Activated CD4-positive, alpha-beta memory T cell treated with anti-CD3 and anti-CD28 coated beads, Interleukin-2, amount 10 ng/mL, durations not matched to agents 7 days and 5 days (primary cell): ENCODE measurements at regions of chr7 and their contacts with region 1.

Region 1: DNA sequence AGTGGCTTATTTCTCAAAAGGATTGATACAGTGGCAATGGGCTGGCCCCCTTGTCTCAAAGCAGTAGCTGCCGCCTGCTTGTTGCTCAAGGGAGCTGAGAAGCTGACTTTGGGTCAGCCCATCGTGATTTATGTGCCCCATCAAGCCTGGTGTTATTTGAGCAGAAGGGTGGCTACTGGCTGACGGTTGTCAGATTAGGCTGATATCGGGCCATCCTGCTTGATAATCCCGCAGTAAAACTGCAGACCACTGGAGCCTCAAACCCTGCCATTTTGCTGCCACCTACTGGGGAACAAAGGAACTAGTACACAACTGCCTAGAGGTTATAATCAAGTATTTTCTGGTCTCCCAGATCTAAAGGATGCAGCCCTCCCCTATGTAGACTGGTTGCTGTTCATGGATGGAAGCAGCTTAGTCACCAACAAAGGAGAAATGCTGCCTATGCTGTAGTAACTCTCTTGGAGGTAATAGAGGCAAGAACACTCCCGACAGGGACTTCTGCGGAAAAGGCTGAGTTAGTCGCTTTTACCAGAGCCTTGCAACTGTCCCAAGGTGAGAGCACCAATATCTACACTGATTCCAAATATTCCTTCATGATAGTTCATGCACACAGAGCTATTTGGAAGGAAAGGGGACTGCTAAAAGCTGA is 65.9 kb upstream of the ZNF92 start:
- DNase-seq: peak; percentile 49
- H3K4me3 Mint-ChIP-seq: no peak overlapping the region
- H3K27ac Mint-ChIP-seq: no peak overlapping the region
- H3K4me1 Mint-ChIP-seq: no peaks in the 10 kb centered on the region
- H3K27me3 Mint-ChIP-seq: no peaks in the 10 kb centered on the region

Region 2: GRCh38 chr7:64914557-64914956 is 393.2 kb before region 1 on chr7:
- CTCF ChIA-PET with region 1: no interaction called
- POLR2A ChIA-PET with region 1: no interaction called
- DNase-seq: no peak
- H3K4me3 Mint-ChIP-seq: no peak overlapping the region
- H3K27ac Mint-ChIP-seq: no peak overlapping the region
- H3K4me1 Mint-ChIP-seq: no peaks in the 10 kb centered on the region
- H3K27me3 Mint-ChIP-seq: no peaks in the 10 kb centered on the region

Region 3: DNA sequence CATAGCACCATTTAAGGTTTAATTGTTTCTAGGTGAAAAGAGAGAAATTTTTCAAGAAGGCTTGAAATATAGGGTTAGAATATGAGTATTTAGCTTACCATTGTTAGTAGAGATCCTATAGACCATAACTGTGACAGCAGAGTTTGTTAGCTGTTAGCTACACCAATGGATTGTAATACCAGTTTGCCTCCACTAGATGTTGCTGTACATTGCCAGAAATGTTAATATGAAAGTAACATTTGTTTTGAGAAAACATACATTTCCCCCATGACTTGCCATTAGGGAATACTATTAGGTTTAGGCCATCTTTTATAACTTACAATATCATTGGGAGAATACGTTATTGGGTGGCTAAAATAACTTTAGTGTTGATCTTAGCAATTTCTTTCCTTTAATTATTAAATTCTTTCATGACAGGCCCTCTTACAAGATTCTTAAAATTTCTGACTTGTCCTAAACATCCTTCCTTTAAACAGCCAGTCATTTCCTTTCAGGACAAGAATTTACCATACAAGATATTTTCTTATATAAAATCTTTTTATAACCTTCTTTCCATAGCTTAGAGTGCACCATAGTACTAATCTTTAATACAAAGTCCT is 356.4 kb before region 1 on chr7:
- CTCF ChIA-PET with region 1: interaction called, 30 read pairs
- POLR2A ChIA-PET with region 1: interaction called, 3 read pairs
- DNase-seq: no peak
- H3K4me3 Mint-ChIP-seq: no peak overlapping the region
- H3K27ac Mint-ChIP-seq: no peak overlapping the region
- H3K4me1 Mint-ChIP-seq: peaks cover 1% of the 10 kb centered on the region
- H3K27me3 Mint-ChIP-seq: peaks cover 29% of the 10 kb centered on the region

Region 4: DNA sequence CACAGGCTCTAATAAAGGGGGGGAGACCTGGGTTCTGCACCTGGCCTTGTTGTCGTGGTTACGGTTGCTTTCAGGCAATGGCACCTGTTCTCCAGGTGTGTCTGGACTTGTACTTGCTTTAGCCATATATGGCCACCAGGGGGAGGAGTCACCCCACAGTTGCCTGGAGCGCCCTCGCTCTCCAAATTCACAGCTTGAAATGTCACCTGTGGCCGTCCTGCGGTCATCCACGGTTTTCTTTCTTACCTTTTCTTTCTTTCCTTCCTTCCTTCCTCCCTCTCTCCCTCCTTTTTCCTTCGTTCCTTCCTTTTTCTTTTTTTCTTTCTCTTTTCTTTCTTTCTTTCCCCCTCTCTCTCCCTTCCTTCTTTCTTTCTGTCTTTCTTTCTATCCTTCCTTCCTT is 91.3 kb before region 1 on chr7:
- CTCF ChIA-PET with region 1: interaction called, 26 read pairs
- POLR2A ChIA-PET with region 1: no interaction called
- DNase-seq: peak; percentile 62
- H3K4me3 Mint-ChIP-seq: no peak overlapping the region
- H3K27ac Mint-ChIP-seq: no peak overlapping the region
- H3K4me1 Mint-ChIP-seq: peaks cover 4% of the 10 kb centered on the region
- H3K27me3 Mint-ChIP-seq: no peaks in the 10 kb centered on the region

Region 5: DNA sequence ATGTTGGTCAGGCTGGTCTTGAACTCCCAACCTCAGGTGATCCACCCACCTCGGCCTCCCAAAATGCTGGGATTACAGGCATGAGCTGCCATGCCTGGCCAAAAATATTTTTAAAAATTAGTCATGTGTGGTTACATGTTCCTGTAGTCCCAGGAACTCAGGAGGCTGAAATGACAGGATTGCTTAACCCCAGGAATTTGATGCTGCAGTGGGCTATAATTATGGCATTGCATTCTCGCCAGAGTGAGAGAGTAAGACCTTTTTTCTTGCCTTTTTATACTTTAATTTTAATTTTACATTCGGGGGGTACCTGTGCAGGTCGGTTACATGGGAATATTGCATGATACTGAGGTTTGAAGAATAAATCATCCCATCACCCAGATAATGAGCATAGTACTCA is 20.8 kb before region 1 on chr7:
- CTCF ChIA-PET with region 1: no interaction called
- POLR2A ChIA-PET with region 1: no interaction called
- DNase-seq: no peak
- H3K4me3 Mint-ChIP-seq: no peak overlapping the region
- H3K27ac Mint-ChIP-seq: no peak overlapping the region
- H3K4me1 Mint-ChIP-seq: no peaks in the 10 kb centered on the region
- H3K27me3 Mint-ChIP-seq: peaks cover under 1% of the 10 kb centered on the region